Activated B cell treated with CpG ODN at 0.5 μM for 24 hours (primary cell): ENCODE measurements at regions of chr19 and their contacts with region 1.

Region 1: GRCh38 chr19:58154679-58155648 is 4.4 kb upstream of the ZNF329 start:
- DNase-seq: peak; percentile 99
- ATAC-seq: peak; percentile 82
- H3K4me3 Mint-ChIP-seq: peak overlapping the region; percentile 82
- H3K27ac Mint-ChIP-seq: peak overlapping the region; percentile 70
- H3K4me1 Mint-ChIP-seq: peaks cover 12% of the 10 kb centered on the region
- H3K27me3 Mint-ChIP-seq: no peaks in the 10 kb centered on the region
- CTCF ChIP-seq: peak; percentile 16

Region 2: DNA sequence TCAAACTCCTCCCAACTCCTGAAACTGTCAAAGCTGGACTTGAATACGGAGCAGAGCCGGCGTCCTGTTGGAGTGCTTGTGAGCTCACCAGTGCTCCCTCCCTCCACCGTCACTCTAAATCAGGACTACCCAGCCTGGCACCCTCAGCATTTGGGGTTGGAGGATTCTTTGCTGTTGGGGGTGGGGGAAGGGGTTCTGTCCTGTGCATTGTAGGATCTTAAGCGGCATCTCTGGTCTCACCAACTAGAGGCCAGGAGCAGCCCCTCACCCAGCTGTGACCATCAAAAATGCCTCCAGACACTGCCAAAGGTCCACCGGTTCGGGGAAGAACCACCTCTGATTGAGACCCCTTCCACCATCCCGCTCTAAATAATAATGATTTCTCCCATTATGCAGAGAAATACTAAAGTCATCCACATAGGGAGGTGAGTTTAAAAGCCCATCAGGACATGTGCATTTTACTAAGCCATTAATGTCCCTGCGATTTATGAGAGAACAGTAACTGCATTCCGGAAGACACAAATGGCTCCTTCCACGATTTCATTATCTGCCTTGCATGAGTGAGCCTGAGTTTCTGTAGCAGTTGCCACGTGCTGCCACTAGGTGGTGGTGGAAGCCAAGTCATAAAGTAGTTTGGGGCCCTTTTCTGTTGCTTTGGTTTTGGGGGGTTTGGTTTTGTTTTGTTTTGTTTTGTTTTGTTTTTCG is 1051.2 kb before region 1 on chr19:
- CTCF ChIA-PET with region 1: no interaction called
- POLR2A ChIA-PET with region 1: no interaction called
- intact Hi-C with region 1: loop called (anchors 1 kb)
- DNase-seq: peak; percentile 27
- ATAC-seq: peak; percentile 82
- H3K4me3 Mint-ChIP-seq: peak overlapping the region; percentile 57
- H3K27ac Mint-ChIP-seq: peak overlapping the region; percentile 53
- H3K4me1 Mint-ChIP-seq: peaks cover 5% of the 10 kb centered on the region
- H3K27me3 Mint-ChIP-seq: peaks cover 11% of the 10 kb centered on the region
- CTCF ChIP-seq: no peak

Region 3: GRCh38 chr19:57578487-57579205 is 576.3 kb before region 1 on chr19 and contains the start of gene ZNF416:
- CTCF ChIA-PET with region 1: no interaction called
- POLR2A ChIA-PET with region 1: interaction called, 3 read pairs
- intact Hi-C with region 1: loop called (anchors 1 kb)
- DNase-seq: peak; percentile 79
- ATAC-seq: peak; percentile 92
- H3K4me3 Mint-ChIP-seq: peak within 1 kb of the TSS; percentile 86
- H3K27ac Mint-ChIP-seq: peak within 1 kb of the TSS; percentile 84
- H3K4me1 Mint-ChIP-seq: peaks cover 32% of the 10 kb centered on the region
- H3K27me3 Mint-ChIP-seq: no peaks in the 10 kb centered on the region
- CTCF ChIP-seq: no peak
- total RNA-seq, gene ZNF416: 12.6 and 13.8 TPM in 2 replicates

Region 4: GRCh38 chr19:57850553-57851017 is 304.4 kb before region 1 on chr19:
- CTCF ChIA-PET with region 1: no interaction called
- POLR2A ChIA-PET with region 1: no interaction called
- intact Hi-C with region 1: loop called (anchors 1 kb)
- DNase-seq: no peak
- ATAC-seq: no peak
- H3K4me3 Mint-ChIP-seq: peak overlapping the region; percentile 95
- H3K27ac Mint-ChIP-seq: peak overlapping the region; percentile 93
- H3K4me1 Mint-ChIP-seq: peaks cover 24% of the 10 kb centered on the region
- H3K27me3 Mint-ChIP-seq: no peaks in the 10 kb centered on the region
- CTCF ChIP-seq: no peak

Region 5: DNA sequence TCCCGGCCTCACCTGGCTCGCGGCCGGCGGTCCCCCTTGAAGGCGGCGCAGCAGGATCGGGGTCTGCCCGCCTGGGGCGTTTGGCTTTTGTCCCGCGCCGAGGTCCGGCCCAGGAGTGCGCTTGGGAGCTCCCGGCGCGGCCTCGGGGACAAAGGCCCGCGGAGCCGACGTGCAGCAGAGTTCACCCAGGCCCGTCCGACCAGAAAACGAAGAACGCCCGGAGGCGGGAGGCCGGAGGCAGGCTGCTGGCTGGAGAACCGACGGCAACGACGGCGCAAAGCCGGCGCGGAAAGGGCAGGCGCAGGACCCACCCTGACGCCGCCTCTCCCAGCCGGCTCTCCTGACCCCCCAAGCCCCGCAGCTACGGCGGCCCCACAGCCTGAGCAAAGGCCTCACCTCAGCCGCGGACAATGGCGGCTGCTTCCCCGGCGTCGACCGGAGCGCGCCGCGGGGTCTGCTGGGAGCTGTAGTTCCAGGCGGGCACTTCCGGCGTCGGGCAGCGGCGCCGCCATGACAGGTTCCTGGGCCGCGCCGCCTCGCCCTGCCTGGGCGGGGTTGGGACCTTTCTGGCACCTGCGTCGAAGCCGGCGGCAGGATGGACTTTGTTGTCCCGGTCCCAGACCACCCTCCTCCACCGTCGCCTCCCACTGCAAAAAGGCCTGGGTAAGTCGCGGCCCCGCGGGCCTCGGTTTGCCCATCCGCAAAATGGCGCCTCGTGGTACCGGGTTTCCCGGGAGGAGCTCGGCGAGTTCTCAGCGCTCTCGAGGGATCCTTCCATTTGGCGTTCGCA is 152.4 kb before region 1 on chr19 and contains the start of gene ZNF606:
- CTCF ChIA-PET with region 1: no interaction called
- POLR2A ChIA-PET with region 1: interaction called, 9 read pairs
- intact Hi-C with region 1: loop called (anchors 1 kb)
- DNase-seq: peak; percentile 87
- ATAC-seq: peak; percentile 97
- H3K4me3 Mint-ChIP-seq: peak within 1 kb of the TSS; percentile 88
- H3K27ac Mint-ChIP-seq: peak within 1 kb of the TSS; percentile 87
- H3K4me1 Mint-ChIP-seq: peaks cover 38% of the 10 kb centered on the region
- H3K27me3 Mint-ChIP-seq: no peaks in the 10 kb centered on the region
- CTCF ChIP-seq: no peak
- total RNA-seq, gene ZNF606: 27.8 and 32.9 TPM in 2 replicates

Region 6: GRCh38 chr19:58097781-58098681 is 56.9 kb before region 1 on chr19 and contains the start of gene ZSCAN18:
- CTCF ChIA-PET with region 1: no interaction called
- POLR2A ChIA-PET with region 1: interaction called, 4 read pairs
- intact Hi-C with region 1: loop called (anchors 1 kb)
- DNase-seq: peak; percentile 98
- ATAC-seq: peak; percentile 93
- H3K4me3 Mint-ChIP-seq: peak within 1 kb of the TSS; percentile 90
- H3K27ac Mint-ChIP-seq: peak within 1 kb of the TSS; percentile 100
- H3K4me1 Mint-ChIP-seq: peaks cover 18% of the 10 kb centered on the region
- H3K27me3 Mint-ChIP-seq: no peaks in the 10 kb centered on the region
- CTCF ChIP-seq: no peak
- total RNA-seq, gene ZSCAN18: 40.8 and 49.8 TPM in 2 replicates

Region 7: GRCh38 chr19:58170860-58171259 is 15.9 kb after region 1 on chr19:
- CTCF ChIA-PET with region 1: no interaction called
- POLR2A ChIA-PET with region 1: no interaction called
- intact Hi-C with region 1: no loop called
- DNase-seq: no peak
- ATAC-seq: no peak
- H3K4me3 Mint-ChIP-seq: no peak overlapping the region
- H3K27ac Mint-ChIP-seq: no peak overlapping the region
- H3K4me1 Mint-ChIP-seq: no peaks in the 10 kb centered on the region
- H3K27me3 Mint-ChIP-seq: peaks cover 7% of the 10 kb centered on the region
- CTCF ChIP-seq: no peak

Region 8: GRCh38 chr19:58569191-58569653 is 414.3 kb after region 1 on chr19:
- CTCF ChIA-PET with region 1: no interaction called
- POLR2A ChIA-PET with region 1: no interaction called
- intact Hi-C with region 1: no loop called
- DNase-seq: no peak
- ATAC-seq: no peak
- H3K4me3 Mint-ChIP-seq: no peak overlapping the region
- H3K27ac Mint-ChIP-seq: no peak overlapping the region
- H3K4me1 Mint-ChIP-seq: peaks cover 34% of the 10 kb centered on the region
- H3K27me3 Mint-ChIP-seq: no peaks in the 10 kb centered on the region
- CTCF ChIP-seq: no peak